Activated naive CD8-positive, alpha-beta T cell treated with anti-CD3 and anti-CD28 coated beads, Interleukin-2, amount 10 ng/mL, durations not matched to agents 7 days and 5 days (primary cell): ENCODE measurements at regions of chr3 and their contacts with region 1.

Region 1: DNA sequence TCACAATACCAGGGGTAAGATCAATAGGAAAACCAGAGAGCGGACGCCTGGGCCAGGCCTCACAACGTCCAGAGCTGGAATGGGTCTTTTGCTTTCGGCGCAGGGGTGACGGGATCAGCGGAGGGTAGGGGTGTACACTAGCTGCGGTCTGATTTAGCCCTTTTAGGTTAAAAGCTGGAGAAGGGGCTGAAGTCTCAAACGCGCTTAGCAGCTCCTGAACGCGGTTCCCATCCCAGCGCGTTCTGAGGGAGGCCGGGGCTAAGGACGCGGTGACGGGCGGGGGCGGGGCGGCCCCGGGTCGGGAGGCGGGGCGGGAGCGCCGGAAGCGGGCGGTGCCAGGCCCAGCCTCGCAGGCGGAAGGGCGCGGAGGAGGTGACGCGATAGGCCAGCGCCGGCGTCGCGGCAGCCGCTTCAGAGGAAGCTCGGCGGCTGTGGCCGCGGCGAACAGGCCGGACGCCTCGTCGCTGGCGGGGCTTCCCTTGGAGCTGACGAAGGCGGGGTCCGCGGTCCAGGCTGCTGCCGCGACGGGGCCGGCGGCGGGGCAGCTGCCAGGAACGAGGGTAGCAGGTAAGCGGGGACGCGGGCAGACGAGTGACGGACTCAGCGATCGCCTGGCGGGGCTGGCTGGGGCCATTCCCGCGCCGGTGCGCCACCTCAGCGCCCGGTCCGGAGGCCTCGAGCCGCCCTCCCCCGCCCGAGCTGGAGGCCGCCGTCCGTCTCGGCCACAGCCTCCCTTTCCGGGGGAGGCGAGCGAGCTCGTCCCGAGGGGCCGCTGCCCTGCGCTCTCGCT is at the start of gene SENP5:
- DNase-seq: peak; percentile 93
- ATAC-seq: peak; percentile 98
- H3K4me3 Mint-ChIP-seq: peak within 1 kb of the TSS; percentile 97
- H3K27ac Mint-ChIP-seq: peak within 1 kb of the TSS; percentile 94
- H3K4me1 Mint-ChIP-seq: peaks cover 13% of the 10 kb centered on the region
- H3K27me3 Mint-ChIP-seq: no peaks in the 10 kb centered on the region
- total RNA-seq, gene SENP5: 37.5 to 37.9 TPM

Region 2: GRCh38 chr3:196711838-196712513 is 155.7 kb before region 1 on chr3 and contains the starts of genes CEP19 and PIGX:
- POLR2A ChIA-PET with region 1: interaction called, 11 read pairs
- DNase-seq: peak; percentile 96
- ATAC-seq: peak; percentile 81
- H3K4me3 Mint-ChIP-seq: peak within 1 kb of the TSS; percentile 95
- H3K27ac Mint-ChIP-seq: peak within 1 kb of the TSS; percentile 95
- H3K4me1 Mint-ChIP-seq: peaks cover 24% of the 10 kb centered on the region
- H3K27me3 Mint-ChIP-seq: no peaks in the 10 kb centered on the region
- total RNA-seq, gene CEP19: 4.8 to 5.7 TPM
- total RNA-seq, gene PIGX: 32.6 to 33.5 TPM

Region 3: DNA sequence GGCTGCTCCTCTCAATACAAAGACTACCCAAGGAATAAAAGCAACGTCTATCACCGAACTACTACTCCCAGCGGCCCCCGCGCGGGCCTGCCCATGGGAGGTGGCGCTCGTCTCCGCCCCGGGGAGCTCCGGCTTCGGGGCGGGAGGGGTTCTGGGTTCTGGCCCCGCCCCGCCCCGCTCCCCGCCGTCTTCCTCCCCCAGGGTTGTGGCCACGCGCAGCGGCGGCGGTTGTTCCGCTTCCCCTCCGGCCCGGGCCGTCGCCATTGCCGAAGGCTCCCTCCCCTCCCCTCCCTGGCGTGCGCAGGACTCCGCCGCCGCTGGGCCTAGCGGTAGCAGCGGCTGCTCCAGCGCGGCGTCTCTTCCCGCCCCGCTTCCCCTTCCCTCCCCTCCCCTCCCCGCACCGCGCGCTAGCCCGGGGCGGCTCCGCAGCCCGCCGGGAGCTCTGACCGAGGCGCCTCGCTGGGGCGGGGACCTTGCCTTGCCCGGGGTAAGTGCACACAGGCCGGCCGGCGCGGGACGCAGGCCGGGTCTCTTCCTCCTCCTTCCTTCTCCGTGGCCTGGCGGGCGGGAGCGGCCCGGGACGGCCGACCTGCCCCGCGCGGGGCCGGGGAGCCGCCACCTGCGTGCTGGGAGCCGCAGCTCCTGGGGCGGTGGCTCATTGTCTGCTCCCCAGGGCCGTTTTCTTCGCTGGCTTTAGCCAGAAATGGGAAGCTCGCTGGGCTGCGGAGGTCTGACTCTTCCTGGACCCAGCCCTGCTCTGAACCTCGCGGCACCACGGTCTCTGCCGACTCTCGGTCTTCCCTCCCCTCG is 127.8 kb before region 1 on chr3 and contains the start of gene PAK2:
- POLR2A ChIA-PET with region 1: interaction called, 18 read pairs
- DNase-seq: peak; percentile 91
- ATAC-seq: peak; percentile 90
- H3K4me3 Mint-ChIP-seq: peak within 1 kb of the TSS; percentile 98
- H3K27ac Mint-ChIP-seq: peak within 1 kb of the TSS; percentile 96
- H3K4me1 Mint-ChIP-seq: peaks cover 19% of the 10 kb centered on the region
- H3K27me3 Mint-ChIP-seq: no peaks in the 10 kb centered on the region
- total RNA-seq, gene PAK2: 77.2 to 81.3 TPM

Region 4: DNA sequence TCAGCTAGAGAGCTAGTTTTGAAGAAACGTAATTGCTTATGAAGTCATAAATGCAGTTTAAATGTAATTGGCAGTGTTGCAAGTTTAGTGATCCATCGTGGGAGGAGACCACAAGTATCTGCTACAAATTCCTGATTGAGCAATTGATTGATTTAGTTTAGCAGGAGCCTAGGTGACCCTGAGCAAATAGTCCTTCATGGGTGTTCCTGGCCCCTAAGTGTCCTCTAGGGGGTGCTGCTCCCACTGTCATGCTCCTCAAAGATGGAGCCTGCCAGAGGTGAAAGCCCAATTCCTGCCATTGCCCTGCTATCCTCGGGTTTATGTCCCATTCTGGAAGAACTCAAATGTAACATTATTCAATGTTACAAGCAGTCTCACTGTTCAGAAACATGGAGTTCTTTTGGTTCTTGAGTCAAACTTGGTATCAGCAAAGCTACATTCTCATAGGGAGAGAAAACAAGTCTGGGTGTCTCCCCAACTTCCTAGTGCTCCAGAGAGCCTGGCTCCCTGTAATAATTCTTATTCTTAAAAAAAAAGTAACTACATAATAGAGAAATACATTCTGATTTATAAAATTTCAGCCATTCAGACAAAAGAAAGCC is 29.8 kb before region 1 on chr3:
- POLR2A ChIA-PET with region 1: no interaction called
- DNase-seq: peak; percentile 60
- ATAC-seq: peak; percentile 91
- H3K4me3 Mint-ChIP-seq: no peak overlapping the region
- H3K27ac Mint-ChIP-seq: no peak overlapping the region
- H3K4me1 Mint-ChIP-seq: peaks cover 3% of the 10 kb centered on the region
- H3K27me3 Mint-ChIP-seq: no peaks in the 10 kb centered on the region

Region 5: GRCh38 chr3:196883361-196883760 is 15.7 kb after region 1 on chr3:
- POLR2A ChIA-PET with region 1: interaction called, 10 read pairs
- DNase-seq: no peak
- ATAC-seq: peak; percentile 45
- H3K4me3 Mint-ChIP-seq: peak overlapping the region; percentile 16
- H3K27ac Mint-ChIP-seq: peak overlapping the region; percentile 30
- H3K4me1 Mint-ChIP-seq: peaks cover 30% of the 10 kb centered on the region
- H3K27me3 Mint-ChIP-seq: no peaks in the 10 kb centered on the region

Region 6: DNA sequence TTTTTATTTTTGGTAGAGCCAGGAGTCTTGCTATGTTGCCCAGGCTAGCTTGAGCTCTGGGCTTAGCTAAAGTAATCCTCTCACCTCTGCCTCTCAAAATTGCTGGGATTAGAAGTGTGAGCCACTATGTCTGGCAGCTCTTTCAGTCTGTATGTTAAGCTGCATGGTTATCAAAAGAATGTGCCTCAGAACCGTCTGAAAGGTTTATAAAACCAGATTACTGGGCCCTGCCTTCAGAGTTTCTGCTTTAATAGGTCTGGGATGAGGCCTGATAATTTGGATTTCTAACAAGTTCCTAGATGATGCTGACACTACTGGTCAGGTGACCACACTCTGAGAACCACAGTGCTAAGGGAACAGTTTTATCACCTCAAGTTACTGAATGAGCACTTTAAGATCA is 34.6 kb after region 1 on chr3:
- POLR2A ChIA-PET with region 1: no interaction called
- DNase-seq: no peak
- ATAC-seq: no peak
- H3K4me3 Mint-ChIP-seq: no peak overlapping the region
- H3K27ac Mint-ChIP-seq: no peak overlapping the region
- H3K4me1 Mint-ChIP-seq: no peaks in the 10 kb centered on the region
- H3K27me3 Mint-ChIP-seq: no peaks in the 10 kb centered on the region

Region 7: DNA sequence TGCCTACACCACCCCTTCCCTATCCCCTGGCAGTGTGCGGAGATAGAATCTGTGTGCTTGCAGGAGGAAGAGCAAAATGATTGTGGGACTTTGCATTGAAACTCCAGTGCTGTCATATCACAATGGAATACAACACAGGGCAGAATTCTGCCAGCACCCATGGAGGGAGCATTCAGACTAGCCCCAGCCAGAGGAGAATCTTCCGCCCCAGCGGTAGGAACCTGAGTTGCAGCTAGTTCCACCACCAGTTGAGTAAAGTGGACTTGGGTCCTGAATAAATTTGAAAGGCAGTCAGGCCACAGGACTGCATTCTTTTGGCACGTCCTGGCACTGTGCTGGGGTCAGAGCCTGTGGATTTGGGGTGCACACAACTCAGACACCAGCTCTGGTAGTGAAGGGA is 47.2 kb after region 1 on chr3:
- POLR2A ChIA-PET with region 1: no interaction called
- DNase-seq: no peak
- ATAC-seq: no peak
- H3K4me3 Mint-ChIP-seq: no peak overlapping the region
- H3K27ac Mint-ChIP-seq: no peak overlapping the region
- H3K4me1 Mint-ChIP-seq: peaks cover 1% of the 10 kb centered on the region
- H3K27me3 Mint-ChIP-seq: no peaks in the 10 kb centered on the region

Region 8: DNA sequence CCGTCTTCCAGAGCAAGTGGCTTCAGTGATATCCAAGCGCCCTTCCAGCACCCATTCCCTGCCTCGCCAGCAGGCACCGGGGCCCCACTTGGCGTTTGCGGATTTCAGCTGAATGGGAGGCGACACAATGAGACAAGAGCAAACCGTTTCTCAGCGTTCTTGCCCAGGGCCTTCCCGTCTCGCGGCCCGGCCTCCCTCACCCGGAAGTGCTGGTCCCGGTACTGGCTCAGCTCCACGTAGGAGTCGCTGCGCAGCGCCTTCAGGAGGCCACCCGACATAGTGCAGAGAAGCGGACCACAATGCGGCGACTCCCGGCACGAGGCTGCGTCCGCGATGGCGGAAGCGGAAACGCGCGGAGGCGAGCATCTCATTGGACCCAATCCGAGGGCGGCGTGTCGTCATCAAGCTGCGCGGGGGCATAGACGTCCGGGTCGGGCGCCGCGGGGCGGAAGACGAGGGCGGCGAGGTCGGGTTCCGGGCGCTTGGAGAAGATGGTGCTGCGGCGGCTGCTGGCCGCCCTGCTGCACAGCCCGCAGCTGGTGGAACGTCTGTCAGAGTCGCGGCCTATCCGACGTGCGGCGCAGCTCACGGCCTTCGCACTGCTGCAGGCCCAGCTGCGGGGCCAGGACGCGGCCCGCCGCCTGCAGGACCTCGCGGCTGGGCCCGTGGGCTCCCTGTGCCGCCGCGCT is 74.7 kb after region 1 on chr3 and contains the start of gene NCBP2:
- POLR2A ChIA-PET with region 1: interaction called, 37 read pairs
- DNase-seq: peak; percentile 100
- ATAC-seq: peak; percentile 95
- H3K4me3 Mint-ChIP-seq: peak within 1 kb of the TSS; percentile 98
- H3K27ac Mint-ChIP-seq: peak within 1 kb of the TSS; percentile 94
- H3K4me1 Mint-ChIP-seq: peaks cover 34% of the 10 kb centered on the region
- H3K27me3 Mint-ChIP-seq: no peaks in the 10 kb centered on the region
- total RNA-seq, gene NCBP2: 53.0 to 55.8 TPM

Region 9: DNA sequence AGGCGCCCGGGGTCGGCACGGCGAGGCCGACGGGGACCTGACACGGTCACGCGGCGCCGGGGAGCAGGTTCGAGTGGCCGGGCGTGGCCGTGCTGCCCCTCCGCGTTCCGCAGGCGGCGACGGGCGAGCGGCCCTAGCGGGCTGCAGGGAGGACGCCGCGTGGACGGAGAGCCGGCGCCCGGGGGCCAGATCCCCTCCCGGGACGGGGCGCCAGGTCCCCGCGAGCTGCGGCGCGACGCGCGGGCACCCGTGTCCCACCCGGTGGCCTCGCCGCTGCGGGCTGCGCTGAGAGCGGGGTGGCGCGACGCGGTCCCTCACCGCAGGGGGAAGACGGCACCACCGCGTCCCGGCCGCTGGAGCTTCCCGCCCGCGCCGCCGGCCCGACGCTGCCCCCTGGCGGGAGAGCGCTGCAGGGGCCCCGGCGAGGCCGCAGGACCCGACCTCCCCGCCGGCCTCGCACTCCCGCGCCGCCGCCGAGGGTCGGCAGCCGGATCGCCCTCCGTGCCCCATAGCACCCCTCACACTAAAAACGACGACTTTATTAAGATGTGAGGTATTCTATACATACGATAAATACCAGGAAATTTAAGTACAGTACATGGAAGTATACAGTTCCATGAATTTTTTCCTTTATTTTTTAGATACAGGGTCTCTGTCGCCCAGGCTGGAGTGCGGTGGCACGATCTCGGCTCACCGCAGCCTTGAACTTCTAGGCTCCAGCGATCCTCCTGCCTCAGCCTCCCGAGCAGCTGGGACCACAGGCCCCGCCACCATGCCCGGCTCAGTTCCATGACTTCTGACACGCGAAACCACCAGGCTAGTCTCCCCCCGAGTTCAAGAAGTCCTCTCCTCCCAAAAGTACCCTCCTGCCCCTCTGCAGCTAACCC is 102.2 kb after region 1 on chr3:
- POLR2A ChIA-PET with region 1: interaction called, 12 read pairs
- DNase-seq: peak; percentile 89
- ATAC-seq: peak; percentile 61
- H3K4me3 Mint-ChIP-seq: peak overlapping the region; percentile 82
- H3K27ac Mint-ChIP-seq: peak overlapping the region; percentile 72
- H3K4me1 Mint-ChIP-seq: peaks cover 14% of the 10 kb centered on the region
- H3K27me3 Mint-ChIP-seq: peaks cover 21% of the 10 kb centered on the region